ENCODE measurements at regions of chr17 and their contacts with region 1.

Region 1: GRCh38 chr17:44518032-44518431 is 14.8 kb upstream of the GPATCH8 start:
- DNase-seq: no peak
- ATAC-seq: no peak
- H3K4me3 ChIP-seq: no peak overlapping the region
- H3K27ac ChIP-seq: no peak overlapping the region
- H3K4me1 ChIP-seq: no peaks in the 10 kb centered on the region
- H3K27me3 ChIP-seq: no peaks in the 10 kb centered on the region
- CTCF ChIP-seq: no peak

Region 2: GRCh38 chr17:44279666-44280391 is 238.2 kb before region 1 on chr17:
- CTCF ChIA-PET with region 1: interaction called, 11 read pairs
- POLR2A ChIA-PET with region 1: no interaction called
- intact Hi-C with region 1: no loop called
- DNase-seq: peak; percentile 70
- ATAC-seq: peak; percentile 97
- H3K4me3 ChIP-seq: no peak overlapping the region
- H3K27ac ChIP-seq: peak overlapping the region; percentile 12
- H3K4me1 ChIP-seq: peaks cover 12% of the 10 kb centered on the region
- H3K27me3 ChIP-seq: no peaks in the 10 kb centered on the region
- CTCF ChIP-seq: no peak

Region 3: GRCh38 chr17:44556832-44557606 is 39.0 kb after region 1 on chr17 and contains the start of gene FZD2:
- CTCF ChIA-PET with region 1: no interaction called
- POLR2A ChIA-PET with region 1: no interaction called
- intact Hi-C with region 1: no loop called
- DNase-seq: peak; percentile 98
- ATAC-seq: peak; percentile 90
- H3K4me3 ChIP-seq: peak within 1 kb of the TSS; percentile 84
- H3K27ac ChIP-seq: no peak within 1 kb of the TSS
- H3K4me1 ChIP-seq: peaks cover 23% of the 10 kb centered on the region
- H3K27me3 ChIP-seq: no peaks in the 10 kb centered on the region
- CTCF ChIP-seq: no peak
- total RNA-seq, gene FZD2: 11.6 and 12.8 TPM in 2 replicates